GM12878 (cell line): ENCODE measurements at regions of chr12 and their contacts with region 1.

Region 1: DNA sequence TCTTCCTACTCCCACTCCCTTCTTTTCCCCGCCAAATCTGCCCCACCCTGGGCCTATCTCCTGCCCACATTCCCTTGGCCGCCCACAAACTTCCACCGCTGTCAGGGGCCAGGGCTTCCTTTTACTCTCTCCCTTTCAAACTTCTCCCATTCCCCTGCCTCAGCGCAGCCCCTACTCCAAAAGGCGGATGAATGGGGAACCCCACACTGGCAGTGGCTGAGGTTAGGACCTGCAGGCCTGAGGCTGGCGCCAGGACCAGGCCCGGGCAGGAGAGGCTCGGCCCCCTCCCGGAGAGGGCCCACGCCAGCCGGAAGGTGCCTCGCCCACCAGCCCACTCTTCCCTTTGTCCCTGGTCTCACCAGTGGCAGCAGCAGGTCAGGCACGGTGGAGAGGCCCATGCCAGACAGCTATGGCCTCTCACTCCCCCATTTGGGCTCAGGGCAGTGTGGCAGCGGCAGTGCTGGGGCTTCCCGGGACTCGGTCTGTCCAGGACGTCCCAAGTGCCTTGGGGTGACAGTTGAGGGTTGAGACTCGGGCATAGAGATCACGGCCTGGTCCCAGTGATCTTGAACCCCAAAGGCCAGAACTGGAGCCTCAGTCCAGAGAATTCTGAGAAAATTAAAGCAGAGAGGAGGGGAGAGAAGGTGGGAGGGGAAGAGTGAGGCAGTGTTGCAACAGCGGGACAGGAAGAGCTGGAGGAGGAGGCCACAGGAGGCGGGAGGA is at the start of gene TNFRSF1A:
- DNase-seq: no peak
- ATAC-seq: peak; percentile 59
- H3K4me3 ChIP-seq: peak within 1 kb of the TSS; percentile 97
- H3K27ac ChIP-seq: peak within 1 kb of the TSS; percentile 88
- H3K4me1 ChIP-seq: peaks cover 29% of the 10 kb centered on the region
- H3K27me3 ChIP-seq: no peaks in the 10 kb centered on the region
- CTCF ChIP-seq: no peak
- EP300 ChIP-seq: no peak
- POLR2A ChIP-seq: peak; percentile 78
- RAD21 ChIP-seq: no peak
- polyA plus RNA-seq, gene TNFRSF1A: 0.24 to 0.77 TPM

Region 2: GRCh38 chr12:6323340-6323994 is 18.1 kb before region 1 on chr12:
- CTCF ChIA-PET with region 1: interaction called, 48 read pairs
- POLR2A ChIA-PET with region 1: interaction called, 15 read pairs
- RAD21 ChIA-PET with region 1: interaction called, 23 read pairs
- SMC1A ChIA-PET with region 1: interaction called, 32 read pairs
- in situ Hi-C with region 1: no loop called
- intact Hi-C with region 1: no loop called
- DNase-seq: peak; percentile 71
- ATAC-seq: peak; percentile 87
- H3K4me3 ChIP-seq: no peak overlapping the region
- H3K27ac ChIP-seq: peak overlapping the region; percentile 79
- H3K4me1 ChIP-seq: peaks cover 31% of the 10 kb centered on the region
- H3K27me3 ChIP-seq: no peaks in the 10 kb centered on the region
- CTCF ChIP-seq: peak; percentile 38 to 45 (median 45); a peak in 5 of 6 replicates
- EP300 ChIP-seq: peak; percentile 46 to 53; a peak in 1 of 4 replicates
- POLR2A ChIP-seq: 0 out of 2 replicates have a peak, but pooled peaks have one; percentile 18
- RAD21 ChIP-seq: peak; percentile 34

Region 3: GRCh38 chr12:6330192-6330591 is 11.4 kb before region 1 on chr12:
- CTCF ChIA-PET with region 1: interaction called, 45 read pairs
- POLR2A ChIA-PET with region 1: interaction called, 15 read pairs
- RAD21 ChIA-PET with region 1: interaction called, 18 read pairs
- SMC1A ChIA-PET with region 1: interaction called, 12 read pairs
- in situ Hi-C with region 1: no loop called
- intact Hi-C with region 1: no loop called
- DNase-seq: peak; percentile 68
- ATAC-seq: peak; percentile 95
- H3K4me3 ChIP-seq: no peak overlapping the region
- H3K27ac ChIP-seq: peak overlapping the region; percentile 55
- H3K4me1 ChIP-seq: peaks cover 21% of the 10 kb centered on the region
- H3K27me3 ChIP-seq: no peaks in the 10 kb centered on the region
- CTCF ChIP-seq: no peak
- EP300 ChIP-seq: no peak
- POLR2A ChIP-seq: no peak
- RAD21 ChIP-seq: no peak

Region 4: GRCh38 chr12:6367065-6367968 is 25.7 kb after region 1 on chr12:
- CTCF ChIA-PET with region 1: interaction called, 37 read pairs
- POLR2A ChIA-PET with region 1: interaction called, 6 read pairs
- RAD21 ChIA-PET with region 1: interaction called, 19 read pairs
- SMC1A ChIA-PET with region 1: interaction called, 26 read pairs
- in situ Hi-C with region 1: no loop called
- intact Hi-C with region 1: no loop called
- DNase-seq: peak; percentile 39
- ATAC-seq: peak; percentile 94
- H3K4me3 ChIP-seq: no peak overlapping the region
- H3K27ac ChIP-seq: no peak overlapping the region
- H3K4me1 ChIP-seq: peaks cover 13% of the 10 kb centered on the region; the same call in 1 of the 2 replicates
- H3K27me3 ChIP-seq: no peaks in the 10 kb centered on the region
- CTCF ChIP-seq: peak; percentile 40 to 46 (median 41); a peak in 5 of 6 replicates
- EP300 ChIP-seq: no peak
- POLR2A ChIP-seq: no peak
- RAD21 ChIP-seq: peak; percentile 36; the same call in 1 of the 2 replicates

Region 5: DNA sequence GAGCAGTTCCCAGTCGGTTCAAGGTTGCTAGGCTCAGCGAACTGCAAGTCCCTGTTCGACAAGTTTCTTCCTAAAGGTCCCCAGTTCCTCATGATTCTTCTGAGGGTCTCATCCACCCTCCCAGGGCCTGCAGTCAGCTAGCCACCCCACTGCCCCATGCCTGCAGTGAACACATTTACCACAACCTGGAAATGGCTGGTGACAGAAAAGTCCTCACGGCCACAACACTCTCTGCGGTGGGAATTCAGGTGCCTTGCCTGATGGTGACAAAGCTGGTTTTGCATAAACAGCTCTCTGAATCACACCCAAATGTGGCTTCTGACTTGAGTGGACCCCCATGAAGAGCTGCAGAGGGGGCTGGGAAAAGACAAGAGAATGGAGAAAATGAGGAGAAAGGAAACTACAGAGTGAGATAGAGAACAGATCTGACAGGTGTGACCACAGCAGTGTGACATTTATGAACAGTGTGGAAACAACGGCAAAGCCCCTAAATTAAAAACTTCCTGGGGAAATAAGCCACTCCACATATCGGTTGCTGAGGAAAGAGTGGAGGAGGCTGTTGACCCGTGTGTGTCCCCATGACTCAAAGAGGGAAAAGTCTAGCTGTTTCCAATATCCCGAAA is 101.9 kb after region 1 on chr12:
- CTCF ChIA-PET with region 1: interaction called, 7 read pairs
- POLR2A ChIA-PET with region 1: interaction called, 17 read pairs
- RAD21 ChIA-PET with region 1: interaction called, 6 read pairs
- SMC1A ChIA-PET with region 1: interaction called, 3 read pairs
- in situ Hi-C with region 1: no loop called
- intact Hi-C with region 1: no loop called
- DNase-seq: no peak
- ATAC-seq: peak; percentile 47
- H3K4me3 ChIP-seq: peak overlapping the region; percentile 66
- H3K27ac ChIP-seq: peak overlapping the region; percentile 99
- H3K4me1 ChIP-seq: peaks cover 46% of the 10 kb centered on the region
- H3K27me3 ChIP-seq: no peaks in the 10 kb centered on the region
- CTCF ChIP-seq: no peak
- EP300 ChIP-seq: peak in 1 of 2 experiments; percentile 75; a peak in 2 of 4 replicates
- POLR2A ChIP-seq: peak; percentile 68
- RAD21 ChIP-seq: no peak

Region 6: DNA sequence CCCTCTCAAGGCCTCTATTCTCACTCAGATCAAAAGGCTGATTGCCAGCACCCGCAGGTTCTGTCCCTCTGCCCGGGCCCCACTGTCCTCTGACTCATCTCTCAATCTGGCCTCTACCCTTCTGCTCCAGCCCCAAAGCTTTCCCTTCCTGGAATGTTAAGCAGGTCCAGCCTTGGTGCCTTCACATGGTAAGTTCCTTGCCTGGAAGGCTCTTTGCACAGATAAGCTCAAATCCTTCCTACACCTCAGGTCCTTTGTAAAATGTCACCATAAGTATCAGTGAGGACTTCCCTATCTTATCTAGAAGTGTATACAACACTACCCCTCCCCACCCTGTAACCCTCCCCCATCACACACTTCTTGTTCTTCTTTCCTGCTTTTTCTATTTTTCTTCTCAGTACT is 654.5 kb after region 1 on chr12:
- CTCF ChIA-PET with region 1: no interaction called
- POLR2A ChIA-PET with region 1: no interaction called
- RAD21 ChIA-PET with region 1: no interaction called
- SMC1A ChIA-PET with region 1: no interaction called
- in situ Hi-C with region 1: no loop called
- intact Hi-C with region 1: no loop called
- DNase-seq: no peak
- ATAC-seq: no peak
- H3K4me3 ChIP-seq: no peak overlapping the region
- H3K27ac ChIP-seq: no peak overlapping the region
- H3K4me1 ChIP-seq: no peaks in the 10 kb centered on the region
- H3K27me3 ChIP-seq: no peaks in the 10 kb centered on the region
- CTCF ChIP-seq: no peak
- EP300 ChIP-seq: no peak
- POLR2A ChIP-seq: no peak
- RAD21 ChIP-seq: no peak